ENCODE measurements at regions of chr10 and their contacts with region 1.

Region 1: DNA sequence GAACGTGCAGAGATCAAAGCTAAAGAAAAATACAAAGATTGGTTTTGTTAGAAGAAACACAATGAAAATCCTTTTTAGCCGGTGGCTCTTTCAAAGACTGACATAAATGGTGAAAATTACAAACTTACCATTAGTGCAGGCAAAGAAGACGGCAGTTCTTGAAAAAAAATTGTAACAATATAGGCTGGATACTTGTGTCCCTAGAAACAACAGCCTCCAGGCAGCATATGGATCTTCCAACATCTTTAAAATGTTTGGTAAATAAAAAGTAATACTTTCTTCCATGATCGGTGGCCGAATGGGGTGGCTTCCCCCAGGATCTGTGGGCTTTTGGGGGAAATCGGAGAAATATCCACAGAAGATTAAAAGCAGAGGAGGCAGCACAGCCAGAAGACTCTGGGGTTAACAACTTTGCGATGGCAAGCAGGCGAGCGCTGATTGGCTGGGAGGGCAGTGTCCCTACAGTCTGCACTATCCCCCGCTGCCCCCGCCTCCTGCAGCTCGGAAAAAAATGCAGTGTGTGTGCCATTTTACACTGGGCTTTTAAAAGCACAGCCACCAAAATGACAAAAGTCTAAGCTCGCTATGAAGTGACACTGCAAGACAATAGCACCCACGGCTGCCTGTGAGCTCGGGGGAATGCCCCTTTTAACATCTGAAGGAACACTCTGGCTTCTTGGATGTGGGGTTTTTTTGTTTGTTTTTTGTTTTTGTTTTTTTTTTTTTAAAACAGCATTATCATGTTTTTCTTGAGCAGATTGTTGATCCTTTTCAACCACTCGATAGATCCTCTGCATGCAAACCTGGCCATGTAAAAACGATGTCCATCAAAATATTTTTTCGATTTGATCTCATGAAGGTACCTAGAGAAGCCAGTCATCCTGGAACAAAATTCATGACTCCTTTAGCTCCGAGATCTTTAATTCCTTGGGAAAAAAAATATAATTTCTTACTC is 31.7 kb upstream of the EPC1 start:
- DNase-seq: peak; percentile 69 to 95 (median 91)
- ATAC-seq: peak; percentile 97
- H3K4me3 ChIP-seq: peak overlapping the region; percentile 92
- H3K4me3 Mint-ChIP-seq: no peak overlapping the region
- H3K27ac ChIP-seq: peak overlapping the region; percentile 91
- H3K27ac Mint-ChIP-seq: no peak overlapping the region
- H3K4me1 ChIP-seq: peaks cover 4 to 11% of the 10 kb centered on the region in 2 donors
- H3K4me1 Mint-ChIP-seq: peaks cover 12 to 21% (median 20%) of the 10 kb centered on the region in 7 donors
- H3K27me3 ChIP-seq: no peaks in the 10 kb centered on the region
- H3K27me3 Mint-ChIP-seq: no peaks in the 10 kb centered on the region

Region 2: GRCh38 chr10:30701451-30702173 is 1677.0 kb before region 1 on chr10:
- CTCF ChIA-PET with region 1: no interaction called
- POLR2A ChIA-PET with region 1: no interaction called
- intact Hi-C with region 1: loop called in 1 of 2 experiments (anchors 10 kb)
- DNase-seq: peak in 8 of 9 donors; percentile 68 to 81 (median 74)
- ATAC-seq: peak; percentile 80
- H3K4me3 ChIP-seq: peak overlapping the region; percentile 31
- H3K4me3 Mint-ChIP-seq: peak overlapping the region; percentile 68 to 98 (median 88)
- H3K27ac ChIP-seq: peak overlapping the region; percentile 86
- H3K27ac Mint-ChIP-seq: peak overlapping the region; percentile 88 to 98 (median 96)
- H3K4me1 ChIP-seq: peaks cover 63 to 74% of the 10 kb centered on the region in 2 donors
- H3K4me1 Mint-ChIP-seq: peaks cover 51 to 97% (median 88%) of the 10 kb centered on the region in 7 donors
- H3K27me3 ChIP-seq: no peaks in the 10 kb centered on the region
- H3K27me3 Mint-ChIP-seq: no peaks in the 10 kb centered on the region

Region 3: GRCh38 chr10:31928549-31929260 is 449.9 kb before region 1 on chr10 and contains the start of gene ARHGAP12:
- CTCF ChIA-PET with region 1: no interaction called
- POLR2A ChIA-PET with region 1: interaction called, 3 read pairs
- intact Hi-C with region 1: loop called in 1 of 2 experiments (anchors 5 kb)
- DNase-seq: peak; percentile 76 to 90 (median 85)
- ATAC-seq: peak; percentile 87
- H3K4me3 ChIP-seq: peak within 1 kb of the TSS; percentile 90
- H3K4me3 Mint-ChIP-seq: peak within 1 kb of the TSS; percentile 73 to 95 (median 92)
- H3K27ac ChIP-seq: peak within 1 kb of the TSS; percentile 84
- H3K27ac Mint-ChIP-seq: peak within 1 kb of the TSS; percentile 66 to 93 (median 86)
- H3K4me1 ChIP-seq: peaks cover 10% of the 10 kb centered on the region in 2 donors
- H3K4me1 Mint-ChIP-seq: peaks cover 30 to 51% (median 47%) of the 10 kb centered on the region in 7 donors
- H3K27me3 ChIP-seq: no peaks in the 10 kb centered on the region
- H3K27me3 Mint-ChIP-seq: peaks cover 0 to 9% (median 0%) of the 10 kb centered on the region in 5 donors
- total RNA-seq, gene ARHGAP12: 10.6 to 34.6 (median 31.4) TPM

Region 4: GRCh38 chr10:32273336-32273735 is 105.3 kb before region 1 on chr10:
- CTCF ChIA-PET with region 1: no interaction called
- POLR2A ChIA-PET with region 1: no interaction called
- intact Hi-C with region 1: no loop called
- DNase-seq: no peak
- ATAC-seq: no peak
- H3K4me3 ChIP-seq: no peak overlapping the region
- H3K4me3 Mint-ChIP-seq: no peak overlapping the region
- H3K27ac ChIP-seq: no peak overlapping the region
- H3K27ac Mint-ChIP-seq: peak overlapping the region in 1 of 9 donors; percentile 59
- H3K4me1 ChIP-seq: no peaks in the 10 kb centered on the region
- H3K4me1 Mint-ChIP-seq: peaks cover 0 to 23% (median 10%) of the 10 kb centered on the region in 7 donors
- H3K27me3 ChIP-seq: no peaks in the 10 kb centered on the region
- H3K27me3 Mint-ChIP-seq: no peaks in the 10 kb centered on the region

Region 5: DNA sequence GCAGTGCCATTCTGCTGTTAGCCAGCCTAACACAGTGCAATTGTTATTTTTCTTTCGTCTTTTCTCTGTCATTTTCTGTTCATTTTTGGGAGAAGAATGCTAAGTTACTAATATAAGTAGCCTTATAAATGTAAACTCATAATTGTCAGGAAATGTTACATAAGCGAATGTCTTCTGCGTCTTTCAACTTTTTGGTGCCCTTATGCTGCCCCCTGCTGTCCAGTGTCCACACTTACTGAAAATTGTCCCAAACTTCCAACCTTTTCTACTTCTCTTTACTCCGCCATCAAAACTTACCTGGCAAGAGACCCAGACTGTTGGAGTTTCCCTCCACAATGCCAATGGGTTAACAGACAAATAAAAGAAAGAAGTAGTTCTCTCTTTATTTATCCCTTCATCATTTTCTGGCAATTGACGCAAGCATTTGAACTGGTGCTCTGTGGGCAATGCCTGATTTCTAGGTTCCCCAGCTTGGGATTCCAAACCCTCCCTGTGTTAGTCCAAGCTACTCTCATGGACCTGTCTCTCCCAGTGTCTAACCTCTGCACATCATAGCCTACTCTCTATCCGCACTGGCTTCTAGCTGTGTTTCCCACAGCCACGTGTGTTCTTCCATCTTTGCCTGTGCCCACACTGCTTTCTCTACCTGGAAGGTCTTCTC is 10.7 kb before region 1 on chr10:
- CTCF ChIA-PET with region 1: interaction called, 10 read pairs
- POLR2A ChIA-PET with region 1: interaction called, 7 read pairs
- intact Hi-C with region 1: loop called (anchors 1 kb)
- DNase-seq: peak; percentile 44 to 79 (median 73)
- ATAC-seq: peak; percentile 92
- H3K4me3 ChIP-seq: no peak overlapping the region
- H3K4me3 Mint-ChIP-seq: peak overlapping the region; percentile 11 to 85 (median 64)
- H3K27ac ChIP-seq: peak overlapping the region; percentile 41
- H3K27ac Mint-ChIP-seq: peak overlapping the region; percentile 26 to 92 (median 75)
- H3K4me1 ChIP-seq: peaks cover 9 to 33% of the 10 kb centered on the region in 2 donors
- H3K4me1 Mint-ChIP-seq: peaks cover 29 to 91% (median 70%) of the 10 kb centered on the region in 7 donors
- H3K27me3 ChIP-seq: no peaks in the 10 kb centered on the region
- H3K27me3 Mint-ChIP-seq: no peaks in the 10 kb centered on the region

Region 6: GRCh38 chr10:32795598-32796183 is 417.1 kb after region 1 on chr10:
- CTCF ChIA-PET with region 1: no interaction called
- POLR2A ChIA-PET with region 1: no interaction called
- intact Hi-C with region 1: loop called in 1 of 2 experiments (anchors 2 kb)
- DNase-seq: peak in 5 of 9 donors; percentile 12 to 37 (median 22)
- ATAC-seq: peak; percentile 54
- H3K4me3 ChIP-seq: no peak overlapping the region
- H3K4me3 Mint-ChIP-seq: no peak overlapping the region
- H3K27ac ChIP-seq: no peak overlapping the region
- H3K27ac Mint-ChIP-seq: no peak overlapping the region
- H3K4me1 ChIP-seq: peaks cover 0 to 4% of the 10 kb centered on the region in 2 donors
- H3K4me1 Mint-ChIP-seq: no peaks in the 10 kb centered on the region
- H3K27me3 ChIP-seq: no peaks in the 10 kb centered on the region
- H3K27me3 Mint-ChIP-seq: peaks cover 0 to 3% (median 0%) of the 10 kb centered on the region in 5 donors

Region 7: DNA sequence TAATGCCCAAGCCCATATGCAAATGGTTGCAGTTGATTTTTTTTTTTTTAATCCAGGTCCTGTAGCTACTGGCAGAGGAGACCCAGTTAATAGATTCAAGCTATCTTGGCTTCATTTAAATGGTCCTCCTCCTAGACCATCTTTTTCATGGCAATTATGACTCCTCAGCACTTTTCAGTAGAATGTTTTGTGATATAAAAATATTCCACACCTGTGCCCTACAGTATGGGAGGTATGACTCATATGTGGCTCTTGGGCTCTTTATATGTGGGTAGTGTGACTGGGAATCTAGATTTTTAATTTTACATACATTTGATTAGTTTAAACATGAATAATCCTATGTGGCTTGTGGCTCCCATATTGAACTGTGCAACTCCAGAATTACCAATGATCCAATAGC is 499.3 kb after region 1 on chr10:
- CTCF ChIA-PET with region 1: no interaction called
- POLR2A ChIA-PET with region 1: no interaction called
- intact Hi-C with region 1: no loop called
- DNase-seq: no peak
- ATAC-seq: no peak
- H3K4me3 ChIP-seq: no peak overlapping the region
- H3K4me3 Mint-ChIP-seq: no peak overlapping the region
- H3K27ac ChIP-seq: no peak overlapping the region
- H3K27ac Mint-ChIP-seq: no peak overlapping the region
- H3K4me1 ChIP-seq: no peaks in the 10 kb centered on the region
- H3K4me1 Mint-ChIP-seq: no peaks in the 10 kb centered on the region
- H3K27me3 ChIP-seq: no peaks in the 10 kb centered on the region
- H3K27me3 Mint-ChIP-seq: no peaks in the 10 kb centered on the region

Region 8: DNA sequence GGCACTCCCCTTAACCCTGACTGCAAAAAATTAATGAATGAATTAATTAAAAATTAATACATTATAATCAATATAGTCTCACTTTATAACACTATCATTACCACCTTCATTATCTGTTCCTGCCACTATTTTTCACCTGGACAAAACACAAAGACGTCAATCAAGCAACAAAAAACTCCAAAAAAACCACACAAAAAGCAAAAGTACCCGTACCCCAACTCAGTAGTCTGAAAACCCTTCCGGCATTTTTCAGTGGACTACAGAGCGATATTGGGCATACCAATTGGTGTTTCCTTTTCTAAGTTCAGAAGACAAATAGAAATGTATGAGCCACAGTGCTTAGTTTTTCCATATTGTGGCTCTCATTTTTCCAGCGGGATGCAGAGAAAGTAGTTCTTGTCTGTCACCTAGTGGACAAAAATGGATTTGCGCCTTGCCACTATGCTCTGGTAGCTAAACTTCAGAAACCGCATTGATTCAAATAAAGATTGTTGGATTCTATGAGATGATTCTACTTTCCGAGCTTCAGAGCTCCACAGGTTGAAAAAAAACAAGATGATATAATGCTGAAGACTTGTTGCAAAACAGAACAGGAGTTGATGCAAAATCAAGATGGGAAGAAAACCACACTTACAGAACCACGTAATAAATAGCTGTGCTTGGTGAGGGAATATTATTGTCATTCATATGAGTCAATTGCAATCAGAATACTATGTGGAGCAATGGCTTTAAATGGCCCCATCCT is 630.0 kb after region 1 on chr10:
- CTCF ChIA-PET with region 1: interaction called, 3 read pairs
- POLR2A ChIA-PET with region 1: no interaction called
- intact Hi-C with region 1: loop called in 1 of 2 experiments (anchors 2 kb)
- DNase-seq: peak in 8 of 9 donors; percentile 25 to 65 (median 48)
- ATAC-seq: peak; percentile 50
- H3K4me3 ChIP-seq: peak overlapping the region; percentile 36
- H3K4me3 Mint-ChIP-seq: peak overlapping the region in 9 of 10 donors; percentile 56 to 79 (median 70)
- H3K27ac ChIP-seq: no peak overlapping the region
- H3K27ac Mint-ChIP-seq: peak overlapping the region in 5 of 9 donors; percentile 16 to 56 (median 26)
- H3K4me1 ChIP-seq: peaks cover 6 to 42% of the 10 kb centered on the region in 2 donors
- H3K4me1 Mint-ChIP-seq: peaks cover 17 to 39% (median 33%) of the 10 kb centered on the region in 7 donors
- H3K27me3 ChIP-seq: no peaks in the 10 kb centered on the region
- H3K27me3 Mint-ChIP-seq: peaks cover 0 to 9% (median 0%) of the 10 kb centered on the region in 5 donors

Region 9: GRCh38 chr10:33248638-33249037 is 870.0 kb after region 1 on chr10:
- CTCF ChIA-PET with region 1: no interaction called
- POLR2A ChIA-PET with region 1: no interaction called
- intact Hi-C with region 1: loop called in 1 of 2 experiments (anchors 10 kb)
- DNase-seq: peak in 8 of 9 donors; percentile 38 to 86 (median 76)
- ATAC-seq: peak; percentile 97
- H3K4me3 ChIP-seq: peak overlapping the region; percentile 21
- H3K4me3 Mint-ChIP-seq: peak overlapping the region; percentile 60 to 89 (median 78)
- H3K27ac ChIP-seq: no peak overlapping the region
- H3K27ac Mint-ChIP-seq: peak overlapping the region; percentile 70 to 94 (median 87)
- H3K4me1 ChIP-seq: peaks cover 21 to 29% of the 10 kb centered on the region in 2 donors
- H3K4me1 Mint-ChIP-seq: peaks cover 28 to 80% (median 64%) of the 10 kb centered on the region in 7 donors
- H3K27me3 ChIP-seq: no peaks in the 10 kb centered on the region
- H3K27me3 Mint-ChIP-seq: peaks cover 0 to 43% (median 0%) of the 10 kb centered on the region in 5 donors

Measured in naive thymus-derived CD4-positive, alpha-beta T cell (primary cell).